Endothelial cell of umbilical vein (primary cell): ENCODE measurements at regions of chr12 and their contacts with region 1.

Region 1: GRCh38 chr12:116376354-116377193 is 99.1 kb upstream of the MED13L start:
- DNase-seq: peak; percentile 95
- H3K4me3 ChIP-seq: peak overlapping the region in 1 of 3 experiments; percentile 25
- H3K27ac ChIP-seq: peak overlapping the region; percentile 59
- H3K4me1 ChIP-seq: peaks cover 23% of the 10 kb centered on the region
- H3K27me3 ChIP-seq: no peaks in the 10 kb centered on the region
- CTCF ChIP-seq: no peak
- POLR2A ChIP-seq: no peak

Region 2: DNA sequence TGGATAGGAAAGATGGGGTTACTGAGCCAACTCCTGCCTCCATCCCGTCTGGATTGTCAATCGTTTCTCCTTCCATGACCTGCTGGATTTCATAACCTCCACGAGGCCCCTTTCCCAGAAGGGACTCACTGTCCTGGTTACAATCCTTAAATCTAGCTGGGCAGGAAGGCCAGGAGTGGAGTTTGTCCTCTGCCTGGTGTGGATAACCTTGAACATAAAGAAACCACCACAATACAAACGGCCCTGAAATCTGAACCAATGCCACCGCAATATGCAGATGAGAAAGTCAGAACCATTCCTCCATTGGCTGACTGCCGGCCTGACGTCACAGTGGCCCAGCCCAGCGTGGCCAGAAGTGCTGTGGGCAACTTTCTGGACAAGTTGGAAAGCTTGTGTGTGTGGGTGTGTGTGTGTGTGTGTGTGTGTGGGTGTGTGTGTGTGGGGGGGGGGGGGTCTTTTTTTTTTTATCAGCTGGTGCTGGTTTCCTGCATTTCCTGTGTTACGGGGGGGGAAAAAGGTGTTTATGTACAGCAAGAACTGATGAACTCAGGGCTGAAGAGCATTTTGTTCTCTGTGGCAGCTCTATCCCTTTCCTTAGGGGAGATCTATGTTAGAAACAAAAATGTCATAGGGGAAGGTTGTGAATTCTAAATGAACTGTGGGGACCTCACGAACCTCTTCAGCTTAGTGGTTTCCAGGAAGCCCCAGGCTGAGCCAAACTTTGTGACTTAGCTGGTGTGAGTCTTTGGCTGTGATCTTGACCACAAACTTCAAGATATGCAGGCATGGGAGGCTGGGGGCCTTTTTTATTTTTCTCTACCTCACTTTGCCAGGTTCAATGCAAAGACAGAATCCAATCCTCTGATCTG is 17.4 kb before region 1 on chr12:
- CTCF ChIA-PET with region 1: interaction called, 15 read pairs
- POLR2A ChIA-PET with region 1: interaction called, 11 read pairs
- dilution Hi-C with region 1: no loop called
- intact Hi-C with region 1: loop called (anchors 1 kb)
- DNase-seq: peak; percentile 99
- H3K4me3 ChIP-seq: no peak overlapping the region
- H3K27ac ChIP-seq: peak overlapping the region; percentile 68
- H3K4me1 ChIP-seq: peaks cover 18% of the 10 kb centered on the region
- H3K27me3 ChIP-seq: no peaks in the 10 kb centered on the region
- CTCF ChIP-seq: no peak
- POLR2A ChIP-seq: peak; percentile 47

Region 3: GRCh38 chr12:116434155-116435011 is 57.8 kb after region 1 on chr12:
- CTCF ChIA-PET with region 1: no interaction called
- POLR2A ChIA-PET with region 1: no interaction called
- dilution Hi-C with region 1: no loop called
- intact Hi-C with region 1: no loop called
- DNase-seq: peak; percentile 59
- H3K4me3 ChIP-seq: no peak overlapping the region
- H3K27ac ChIP-seq: no peak overlapping the region
- H3K4me1 ChIP-seq: peaks cover 3% of the 10 kb centered on the region
- H3K27me3 ChIP-seq: no peaks in the 10 kb centered on the region
- CTCF ChIP-seq: no peak
- POLR2A ChIP-seq: no peak

Region 4: DNA sequence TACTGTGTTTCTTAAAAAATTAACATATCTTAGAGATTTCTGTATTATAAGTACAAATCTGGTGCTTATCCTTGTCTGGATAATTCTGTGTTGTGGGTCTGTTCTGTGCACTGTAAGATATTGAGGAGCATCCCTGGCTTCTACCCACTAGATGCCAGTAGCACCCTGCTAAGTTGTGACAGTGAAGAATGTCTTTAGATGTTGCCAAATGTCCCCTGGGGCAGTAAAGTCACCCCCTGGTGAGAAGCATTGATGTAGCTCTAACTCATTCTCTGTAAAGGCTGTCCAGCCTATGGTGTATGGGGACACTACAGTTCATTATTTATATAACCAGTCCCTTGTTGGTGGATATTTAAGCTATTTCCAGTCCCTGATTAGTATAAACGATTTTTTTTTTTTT is 214.0 kb after region 1 on chr12:
- CTCF ChIA-PET with region 1: no interaction called
- POLR2A ChIA-PET with region 1: no interaction called
- dilution Hi-C with region 1: no loop called
- intact Hi-C with region 1: no loop called
- DNase-seq: no peak
- H3K4me3 ChIP-seq: no peak overlapping the region
- H3K27ac ChIP-seq: no peak overlapping the region
- H3K4me1 ChIP-seq: no peaks in the 10 kb centered on the region
- H3K27me3 ChIP-seq: no peaks in the 10 kb centered on the region
- CTCF ChIP-seq: no peak
- POLR2A ChIP-seq: no peak